ENCODE measurements at regions of chr3 and their contacts with region 1.

Region 1: DNA sequence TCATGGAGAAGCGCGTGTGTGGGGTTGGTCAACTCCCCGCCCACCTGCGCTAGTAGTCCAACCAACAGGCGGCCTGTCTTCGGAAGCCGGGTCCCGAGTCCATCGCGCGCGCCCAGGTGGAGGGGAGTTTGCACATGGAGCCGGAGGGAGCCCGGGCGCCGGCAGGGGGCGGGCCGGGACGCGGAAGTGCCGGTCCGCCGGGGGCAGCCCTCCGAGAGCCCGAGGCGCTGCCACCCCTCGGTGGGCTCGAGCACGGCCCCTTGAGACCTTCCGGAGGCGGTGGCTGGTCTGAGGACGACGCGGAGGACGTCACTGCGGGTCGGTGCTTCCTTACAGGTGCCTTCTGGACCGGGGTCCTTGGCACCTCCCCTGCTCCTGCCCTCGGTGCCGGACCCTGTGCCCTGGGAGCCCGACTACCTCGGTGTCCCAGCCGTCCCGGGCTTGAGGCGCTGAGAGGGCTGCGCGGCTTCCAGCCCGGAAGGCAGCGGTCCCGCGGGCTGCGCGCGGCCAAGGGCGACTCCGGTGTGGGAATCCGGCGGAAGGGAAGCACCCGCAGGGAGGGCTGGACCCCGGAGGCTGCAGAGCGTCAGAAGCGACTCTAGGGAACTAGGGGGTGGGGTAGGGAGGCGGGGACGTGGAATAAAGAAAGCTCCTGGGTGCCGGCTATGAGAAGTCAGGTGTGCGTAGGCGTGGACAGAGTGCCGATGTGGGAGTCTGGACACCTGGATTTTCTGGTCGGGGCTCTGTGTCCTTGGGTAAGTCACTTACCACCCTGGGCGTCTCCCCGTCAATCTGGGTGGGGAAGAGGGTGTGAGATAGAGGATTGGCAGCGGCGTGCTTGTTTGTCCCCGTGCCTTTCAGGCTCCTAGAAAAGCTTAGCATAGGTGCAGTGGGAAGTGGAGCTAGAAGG is 212.3 kb downstream of the FGF12 start:
- DNase-seq: no peak
- ATAC-seq: peak; percentile 24

Region 2: GRCh38 chr3:192481638-192482037 is 33.4 kb before region 1 on chr3:
- intact Hi-C with region 1: loop called (anchors 5 kb)
- DNase-seq: no peak
- ATAC-seq: no peak

Region 3: GRCh38 chr3:192494174-192494573 is 20.8 kb before region 1 on chr3:
- intact Hi-C with region 1: loop called (anchors 2 kb)
- DNase-seq: no peak
- ATAC-seq: peak; percentile 20

Measured in Right ventricle myocardium inferior (tissue), 1 donor.